Esophagus muscularis mucosa (tissue), 4 donors: ENCODE measurements at regions of chr17 and their contacts with region 1.

Region 1: GRCh38 chr17:47840740-47841603 is at the start of gene SCRN2:
- DNase-seq: peak; percentile 97
- H3K4me3 ChIP-seq: peak within 1 kb of the TSS; percentile 71 to 94 (median 88)
- H3K27ac ChIP-seq: peak within 1 kb of the TSS; percentile 52 to 76 (median 74)
- H3K4me1 ChIP-seq: peaks cover 15 to 46% (median 41%) of the 10 kb centered on the region in 4 donors
- H3K27me3 ChIP-seq: peaks cover 0 to 15% (median 6%) of the 10 kb centered on the region in 4 donors
- CTCF ChIP-seq: peak; percentile 96 to 99 (median 99)
- EP300 ChIP-seq: no peak
- POLR2A ChIP-seq: no peak
- total RNA-seq, gene SCRN2: 9.6 to 34.0 (median 23.1) TPM

Region 2: GRCh38 chr17:47889734-47890529 is 49.0 kb after region 1 on chr17:
- intact Hi-C with region 1: loop called (anchors 1 kb)
- DNase-seq: peak; percentile 97
- H3K4me3 ChIP-seq: no peak overlapping the region
- H3K27ac ChIP-seq: no peak overlapping the region
- H3K4me1 ChIP-seq: peaks cover 11 to 18% (median 13%) of the 10 kb centered on the region in 4 donors
- H3K27me3 ChIP-seq: peaks cover 0 to 6% (median 0%) of the 10 kb centered on the region in 4 donors
- CTCF ChIP-seq: peak in 2 of 3 experiments; percentile 90 to 96
- EP300 ChIP-seq: no peak
- POLR2A ChIP-seq: no peak

Region 3: GRCh38 chr17:47941236-47941994 is 100.4 kb after region 1 on chr17 and contains the start of gene PNPO:
- intact Hi-C with region 1: loop called (anchors 10 kb)
- DNase-seq: peak; percentile 99
- H3K4me3 ChIP-seq: peak within 1 kb of the TSS; percentile 77 to 97 (median 90)
- H3K27ac ChIP-seq: peak within 1 kb of the TSS; percentile 81 to 88 (median 87)
- H3K4me1 ChIP-seq: peaks cover 19 to 47% (median 33%) of the 10 kb centered on the region in 4 donors
- H3K27me3 ChIP-seq: no peaks in the 10 kb centered on the region
- CTCF ChIP-seq: peak in 1 of 3 experiments; percentile 2
- EP300 ChIP-seq: no peak
- POLR2A ChIP-seq: no peak
- total RNA-seq, gene PNPO: 21.2 to 32.8 (median 27.6) TPM

Region 4: DNA sequence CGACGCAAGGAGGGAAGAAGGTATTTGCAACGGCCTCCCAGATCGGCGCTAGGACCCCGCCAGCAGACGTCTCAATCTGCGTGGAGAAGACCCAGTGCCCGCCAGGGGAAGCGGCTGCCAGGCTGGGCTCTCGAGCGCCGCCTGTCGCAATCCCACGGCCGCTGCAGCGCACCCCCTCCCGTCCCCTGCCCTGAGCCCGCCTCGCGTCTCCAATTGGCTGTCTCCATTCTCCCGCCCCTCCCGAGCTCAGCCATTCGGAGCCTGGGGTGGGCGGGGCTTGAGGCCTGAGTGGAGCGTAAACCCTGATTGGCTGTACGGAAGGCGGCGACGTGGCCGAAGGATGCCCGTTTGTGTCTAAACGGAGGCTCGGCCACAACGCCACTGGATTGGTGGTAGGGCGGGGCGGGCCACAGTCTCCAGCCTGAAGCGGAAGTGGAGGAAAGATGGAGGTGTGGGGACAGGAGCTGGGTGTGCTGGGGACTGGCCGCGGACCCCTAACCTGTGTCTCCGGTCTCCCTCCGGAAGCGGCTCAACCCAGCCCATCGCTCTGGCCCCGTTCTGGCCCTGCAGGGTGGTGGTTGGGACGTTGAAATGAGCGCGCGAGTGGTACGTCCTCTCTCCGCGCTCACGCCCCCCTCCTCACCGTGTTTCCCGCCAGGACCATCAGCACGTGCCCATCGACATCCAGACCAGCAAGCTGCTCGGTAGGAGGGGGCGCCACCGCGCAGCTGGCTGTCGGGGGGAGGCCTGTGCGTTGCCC is 129.9 kb after region 1 on chr17 and contains the start of gene CDK5RAP3:
- intact Hi-C with region 1: loop called (anchors 10 kb)
- DNase-seq: peak; percentile 100
- H3K4me3 ChIP-seq: peak within 1 kb of the TSS; percentile 71 to 95 (median 87)
- H3K27ac ChIP-seq: peak within 1 kb of the TSS; percentile 80 to 89 (median 84)
- H3K4me1 ChIP-seq: peaks cover 7 to 28% (median 21%) of the 10 kb centered on the region in 4 donors
- H3K27me3 ChIP-seq: peaks cover 0 to 9% (median 0%) of the 10 kb centered on the region in 4 donors
- CTCF ChIP-seq: peak; percentile 92 to 100 (median 96)
- EP300 ChIP-seq: no peak
- POLR2A ChIP-seq: no peak
- total RNA-seq, gene CDK5RAP3: 43.9 to 70.2 (median 58.4) TPM

Region 5: DNA sequence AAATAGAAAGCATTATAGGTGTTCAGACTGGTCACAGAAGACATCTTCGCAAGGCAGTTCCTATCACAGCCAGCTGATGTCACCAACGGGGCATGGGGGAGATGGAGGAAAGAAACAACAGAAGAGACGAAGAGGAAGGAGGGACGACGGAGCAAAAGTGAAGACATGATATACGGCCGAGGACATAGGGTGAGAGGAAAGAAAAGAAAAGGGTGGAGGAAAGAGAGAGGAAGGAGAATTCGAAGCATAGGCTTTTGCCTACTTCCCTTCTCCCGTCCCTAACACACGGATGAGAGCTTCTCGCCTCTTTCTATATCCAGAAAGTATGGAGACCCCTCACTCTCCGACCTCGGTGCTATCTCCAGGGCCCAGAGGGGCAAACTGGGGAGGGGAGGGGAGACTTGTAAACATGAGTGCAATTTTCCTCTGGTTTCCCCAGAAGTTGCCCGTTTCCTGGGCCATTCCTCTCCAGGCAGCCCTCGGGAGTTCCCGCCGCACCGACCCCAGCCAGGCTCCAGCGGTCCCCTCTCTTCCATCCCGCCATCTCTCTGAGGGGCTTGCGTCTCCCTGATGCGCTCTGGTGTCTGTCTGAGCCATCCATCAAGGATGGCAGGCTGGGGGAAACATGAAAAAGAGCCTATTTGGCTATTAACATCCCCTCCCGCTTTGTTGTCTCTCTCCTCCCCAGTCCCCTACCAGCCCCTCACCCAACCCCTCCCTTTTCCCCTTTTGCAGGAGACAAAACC is 170.6 kb after region 1 on chr17:
- intact Hi-C with region 1: loop called (anchors 10 kb)
- DNase-seq: no peak
- H3K4me3 ChIP-seq: peak overlapping the region; percentile 39 to 57 (median 43)
- H3K27ac ChIP-seq: no peak overlapping the region
- H3K4me1 ChIP-seq: peaks cover 10 to 17% (median 14%) of the 10 kb centered on the region in 4 donors
- H3K27me3 ChIP-seq: peaks cover 0 to 79% (median 23%) of the 10 kb centered on the region in 4 donors
- CTCF ChIP-seq: peak in 2 of 3 experiments; percentile 16 to 47
- EP300 ChIP-seq: no peak
- POLR2A ChIP-seq: no peak